OCI-LY7 (cell line): ENCODE measurements at regions of chr10 and their contacts with region 1.

Region 1: GRCh38 chr10:98425511-98426352 is 10.8 kb upstream of the PYROXD2 start:
- DNase-seq: peak; percentile 63
- H3K4me3 ChIP-seq: no peak overlapping the region
- H3K27ac ChIP-seq: no peak overlapping the region
- H3K4me1 ChIP-seq: no peaks in the 10 kb centered on the region
- CTCF ChIP-seq: peak; percentile 81

Region 2: DNA sequence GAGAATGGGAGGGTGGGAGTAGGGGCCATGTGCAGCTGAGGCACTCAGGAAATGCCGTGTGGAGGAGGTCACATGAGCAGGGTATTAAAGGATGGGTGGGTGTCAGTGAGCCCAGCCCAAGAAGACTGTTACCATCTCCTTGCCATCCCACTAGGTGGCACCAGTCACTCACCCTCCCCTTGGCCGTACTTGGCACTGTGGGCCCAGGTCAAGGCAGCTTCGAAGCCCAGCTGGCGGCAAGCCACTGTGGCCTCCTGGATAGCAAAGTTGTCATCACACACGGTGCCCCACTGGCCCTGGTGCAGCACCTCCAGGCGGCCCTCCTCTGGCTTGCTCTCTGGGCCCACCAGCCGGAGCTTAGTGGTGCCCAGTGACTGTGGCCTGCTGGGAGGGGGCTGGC is 163.2 kb before region 1 on chr10:
- CTCF ChIA-PET with region 1: no interaction called
- POLR2A ChIA-PET with region 1: no interaction called
- intact Hi-C with region 1: no loop called
- DNase-seq: peak; percentile 13
- H3K4me3 ChIP-seq: no peak overlapping the region
- H3K27ac ChIP-seq: no peak overlapping the region
- H3K4me1 ChIP-seq: no peaks in the 10 kb centered on the region
- CTCF ChIP-seq: peak; percentile 56

Region 3: GRCh38 chr10:98664331-98665042 is 238.8 kb after region 1 on chr10:
- CTCF ChIA-PET with region 1: no interaction called
- POLR2A ChIA-PET with region 1: no interaction called
- intact Hi-C with region 1: loop called (anchors 5 kb)
- DNase-seq: peak; percentile 52
- H3K4me3 ChIP-seq: no peak overlapping the region
- H3K27ac ChIP-seq: no peak overlapping the region
- H3K4me1 ChIP-seq: no peaks in the 10 kb centered on the region
- CTCF ChIP-seq: peak; percentile 88